ENCODE measurements at regions of chr11 and their contacts with region 1.

Region 1: DNA sequence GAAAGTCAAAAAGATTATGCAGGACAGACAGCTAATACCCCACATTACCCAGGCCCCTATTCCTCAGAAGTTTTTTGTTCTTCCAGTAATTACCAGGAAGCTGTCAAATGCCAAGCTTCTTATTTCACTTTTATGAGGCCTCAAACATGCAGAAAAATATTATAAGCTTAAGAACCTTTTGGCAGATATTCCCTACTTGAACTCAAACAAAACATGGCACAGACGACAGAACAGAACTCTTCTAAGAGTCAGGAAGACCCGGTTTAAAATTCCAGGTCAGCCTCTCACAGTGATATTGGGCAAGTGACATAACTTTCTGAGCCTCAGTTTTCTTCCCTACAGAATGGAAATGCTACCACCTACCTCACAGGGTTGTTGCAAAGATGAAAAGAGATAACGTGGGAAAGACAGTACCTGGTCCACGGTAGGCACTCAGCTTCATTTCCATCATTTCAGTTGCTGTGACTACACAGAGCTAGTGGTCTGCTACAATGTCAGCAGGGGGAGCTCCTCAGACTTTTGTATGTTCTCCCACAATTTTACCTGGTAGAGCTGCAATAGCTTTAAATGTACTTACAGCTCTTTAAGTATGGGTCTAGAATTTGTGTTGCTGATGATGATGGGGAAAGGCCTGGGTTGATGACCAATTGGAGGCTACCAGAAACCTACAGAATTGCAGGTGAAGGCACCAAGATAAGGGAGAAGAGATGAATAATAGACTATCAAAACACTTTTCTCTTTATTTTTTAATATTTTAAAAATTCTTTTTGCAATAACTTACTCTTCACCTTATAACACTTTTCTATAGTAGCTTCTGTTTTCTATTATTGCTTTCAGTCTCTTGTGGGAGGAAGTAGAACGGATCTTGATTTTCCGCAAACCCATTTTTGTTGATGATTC is 98.3 kb upstream of the CHRM4 start:
- DNase-seq: peak; percentile 10
- ATAC-seq: peak; percentile 95
- H3K4me3 ChIP-seq: no peak overlapping the region
- H3K27ac ChIP-seq: no peak overlapping the region
- H3K4me1 ChIP-seq: no peaks in the 10 kb centered on the region
- H3K27me3 ChIP-seq: no peaks in the 10 kb centered on the region
- CTCF ChIP-seq: peak; percentile 82

Region 2: GRCh38 chr11:46593550-46594373 is 103.9 kb after region 1 on chr11 and contains the start of gene AMBRA1:
- CTCF ChIA-PET with region 1: no interaction called
- POLR2A ChIA-PET with region 1: no interaction called
- in situ Hi-C with region 1: no loop called
- intact Hi-C with region 1: no loop called
- DNase-seq: peak; percentile 92
- ATAC-seq: peak; percentile 91
- H3K4me3 ChIP-seq: peak within 1 kb of the TSS; percentile 89 to 99
- H3K27ac ChIP-seq: peak within 1 kb of the TSS; percentile 97
- H3K4me1 ChIP-seq: peaks cover 33% of the 10 kb centered on the region
- H3K27me3 ChIP-seq: no peaks in the 10 kb centered on the region
- CTCF ChIP-seq: no peak
- total RNA-seq, gene AMBRA1: 40.0 TPM

Region 3: DNA sequence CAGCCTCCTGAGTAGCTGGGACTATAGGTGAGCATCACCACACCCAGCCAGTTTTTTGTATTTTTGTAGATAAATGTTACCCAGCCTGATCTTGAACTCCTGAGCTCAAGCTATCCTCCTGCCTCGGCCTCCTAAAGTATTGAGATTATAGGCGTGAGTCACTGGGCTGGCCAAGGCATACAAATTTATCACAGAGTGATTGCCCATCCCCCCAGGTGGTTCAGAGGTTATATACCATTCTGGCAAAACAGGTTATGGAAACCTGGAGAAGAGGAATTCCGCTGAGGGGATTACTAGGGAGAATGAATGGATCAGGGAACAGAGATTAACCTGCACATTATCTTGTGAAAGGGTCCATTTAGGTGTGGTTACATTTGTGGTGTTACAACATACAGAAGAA is 135.5 kb after region 1 on chr11:
- CTCF ChIA-PET with region 1: interaction called, 10 read pairs
- POLR2A ChIA-PET with region 1: no interaction called
- in situ Hi-C with region 1: no loop called
- intact Hi-C with region 1: no loop called
- DNase-seq: no peak
- ATAC-seq: no peak
- H3K4me3 ChIP-seq: no peak overlapping the region
- H3K27ac ChIP-seq: no peak overlapping the region
- H3K4me1 ChIP-seq: no peaks in the 10 kb centered on the region
- H3K27me3 ChIP-seq: no peaks in the 10 kb centered on the region
- CTCF ChIP-seq: no peak